ENCODE measurements at regions of chr11 and their contacts with region 1.

Region 1: DNA sequence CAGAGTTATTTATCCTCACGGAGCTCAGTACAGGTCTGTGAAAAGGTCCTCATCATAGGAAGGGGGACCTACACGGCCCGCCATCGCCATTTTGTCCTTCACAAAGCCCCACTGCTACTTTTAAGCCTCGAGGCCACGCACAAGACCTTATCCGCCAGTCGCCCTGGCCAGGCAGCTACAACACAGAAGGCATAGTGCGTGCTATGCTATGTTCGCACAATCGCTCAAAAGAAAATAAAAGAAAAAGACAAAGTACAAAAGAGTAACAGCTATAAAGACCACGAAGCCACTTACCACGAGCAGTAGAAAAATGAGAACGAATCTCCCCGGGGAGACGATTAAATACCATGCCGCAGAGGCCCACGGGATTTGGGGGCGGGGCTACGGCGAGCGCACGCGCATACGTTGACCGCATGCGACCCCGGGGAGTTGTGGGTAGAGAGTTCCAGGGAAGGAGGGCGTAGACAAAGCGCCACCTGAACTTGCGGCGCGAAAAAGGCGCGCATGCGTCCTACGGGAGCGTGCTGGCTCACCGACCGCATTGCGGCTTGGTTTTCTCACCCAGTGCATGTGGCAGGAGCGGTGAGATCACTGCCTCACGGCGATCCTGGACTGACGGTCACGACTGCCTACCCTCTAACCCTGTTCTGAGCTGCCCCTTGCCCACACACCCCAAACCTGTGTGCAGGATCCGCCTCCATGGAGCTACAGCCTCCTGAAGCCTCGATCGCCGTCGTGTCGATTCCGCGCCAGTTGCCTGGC is 16.4 kb upstream of the WDR74 start:
- DNase-seq: peak; percentile 98
- ATAC-seq: peak; percentile 94
- H3K4me3 ChIP-seq: peak overlapping the region; percentile 72
- H3K27ac ChIP-seq: peak overlapping the region; percentile 89
- H3K4me1 ChIP-seq: peaks cover 2% of the 10 kb centered on the region; the same call in 1 of the 2 replicates
- H3K27me3 ChIP-seq: no peaks in the 10 kb centered on the region
- CTCF ChIP-seq: no peak
- POLR2A ChIP-seq: peak; percentile 100
- RAD21 ChIP-seq: no peak

Region 2: DNA sequence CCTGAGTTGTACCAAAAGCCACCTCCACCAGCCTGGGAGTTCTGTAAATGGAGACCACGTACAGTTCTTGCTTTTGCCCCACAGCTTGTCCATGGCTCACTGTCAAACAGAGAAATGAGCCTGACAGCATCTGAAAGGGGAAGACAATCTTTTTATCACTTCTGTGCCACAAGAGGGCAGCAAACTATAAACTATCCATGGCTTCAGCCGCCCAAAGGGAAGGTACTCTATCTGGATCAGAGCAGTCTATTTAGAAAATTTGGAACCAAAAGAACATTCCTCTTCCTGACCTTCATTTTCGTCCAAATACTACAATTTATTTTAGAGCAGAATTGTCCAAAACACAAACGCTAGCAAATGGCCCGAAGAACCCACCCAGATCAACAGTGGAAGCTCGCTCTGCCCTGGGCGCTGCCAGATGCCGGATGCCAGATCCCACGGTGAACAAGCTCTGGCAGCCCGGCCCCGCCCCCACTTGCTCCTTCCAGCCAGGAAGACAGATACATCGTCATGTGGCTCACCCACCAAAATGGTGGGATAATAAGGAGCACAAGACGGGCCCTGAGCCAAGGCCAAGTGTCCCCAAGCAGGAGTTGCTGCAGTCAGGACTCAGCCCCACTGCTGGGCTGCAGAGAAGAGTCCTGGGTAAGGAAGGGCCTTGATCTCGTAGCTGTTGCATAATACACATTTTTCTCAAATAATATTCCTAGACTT is 460.8 kb before region 1 on chr11:
- CTCF ChIA-PET with region 1: interaction called, 3 read pairs
- POLR2A ChIA-PET with region 1: no interaction called
- dilution Hi-C with region 1: no loop called
- in situ Hi-C with region 1: loop called (anchors 25 kb)
- intact Hi-C with region 1: no loop called
- DNase-seq: peak; percentile 80
- ATAC-seq: peak; percentile 86
- H3K4me3 ChIP-seq: peak overlapping the region; percentile 36
- H3K27ac ChIP-seq: peak overlapping the region; percentile 54
- H3K4me1 ChIP-seq: peaks cover 15% of the 10 kb centered on the region; the same call in 1 of the 2 replicates
- H3K27me3 ChIP-seq: peaks cover 2% of the 10 kb centered on the region; the same call in 1 of the 2 replicates
- CTCF ChIP-seq: peak; percentile 80
- POLR2A ChIP-seq: no peak
- RAD21 ChIP-seq: peak; percentile 88

Region 3: GRCh38 chr11:63337070-63337469 is 481.3 kb after region 1 on chr11:
- CTCF ChIA-PET with region 1: no interaction called
- POLR2A ChIA-PET with region 1: no interaction called
- dilution Hi-C with region 1: no loop called
- in situ Hi-C with region 1: no loop called
- intact Hi-C with region 1: no loop called
- DNase-seq: no peak
- ATAC-seq: no peak
- H3K4me3 ChIP-seq: no peak overlapping the region
- H3K27ac ChIP-seq: no peak overlapping the region
- H3K4me1 ChIP-seq: no peaks in the 10 kb centered on the region
- H3K27me3 ChIP-seq: no peaks in the 10 kb centered on the region
- CTCF ChIP-seq: no peak
- POLR2A ChIP-seq: no peak
- RAD21 ChIP-seq: no peak